Activated B cell treated with CpG ODN at 0.5 μM for 24 hours (primary cell): ENCODE measurements at regions of chr12 and their contacts with region 1.

Region 1: GRCh38 chr12:31922341-31923062 is 36.7 kb upstream of the RESF1 start:
- DNase-seq: no peak
- ATAC-seq: no peak
- H3K4me3 Mint-ChIP-seq: no peak overlapping the region
- H3K27ac Mint-ChIP-seq: no peak overlapping the region
- H3K4me1 Mint-ChIP-seq: no peaks in the 10 kb centered on the region
- H3K27me3 Mint-ChIP-seq: no peaks in the 10 kb centered on the region
- CTCF ChIP-seq: no peak

Region 2: DNA sequence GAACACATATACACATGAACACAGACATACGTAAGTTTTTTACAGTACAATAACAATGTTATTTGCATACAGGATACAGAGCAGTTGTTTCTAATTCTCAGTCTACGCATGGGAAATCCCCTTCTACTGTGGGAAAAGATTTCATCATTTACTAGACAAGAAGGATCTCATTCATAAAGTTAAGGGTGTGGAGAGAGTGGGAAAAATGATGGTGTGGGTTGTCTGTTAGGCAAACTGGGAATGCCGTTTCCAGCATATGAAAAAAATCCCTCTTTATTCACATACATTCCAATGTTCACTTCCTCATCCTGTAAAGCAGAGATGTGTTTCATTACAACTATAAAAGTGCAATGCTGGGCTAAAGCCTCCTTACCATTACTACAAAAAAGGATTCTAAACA is 717.4 kb before region 1 on chr12:
- CTCF ChIA-PET with region 1: no interaction called
- POLR2A ChIA-PET with region 1: no interaction called
- intact Hi-C with region 1: no loop called
- DNase-seq: no peak
- ATAC-seq: peak; percentile 88
- H3K4me3 Mint-ChIP-seq: peak overlapping the region; percentile 29
- H3K27ac Mint-ChIP-seq: peak overlapping the region; percentile 13
- H3K4me1 Mint-ChIP-seq: peaks cover 19% of the 10 kb centered on the region
- H3K27me3 Mint-ChIP-seq: peaks cover 9% of the 10 kb centered on the region
- CTCF ChIP-seq: no peak

Region 3: DNA sequence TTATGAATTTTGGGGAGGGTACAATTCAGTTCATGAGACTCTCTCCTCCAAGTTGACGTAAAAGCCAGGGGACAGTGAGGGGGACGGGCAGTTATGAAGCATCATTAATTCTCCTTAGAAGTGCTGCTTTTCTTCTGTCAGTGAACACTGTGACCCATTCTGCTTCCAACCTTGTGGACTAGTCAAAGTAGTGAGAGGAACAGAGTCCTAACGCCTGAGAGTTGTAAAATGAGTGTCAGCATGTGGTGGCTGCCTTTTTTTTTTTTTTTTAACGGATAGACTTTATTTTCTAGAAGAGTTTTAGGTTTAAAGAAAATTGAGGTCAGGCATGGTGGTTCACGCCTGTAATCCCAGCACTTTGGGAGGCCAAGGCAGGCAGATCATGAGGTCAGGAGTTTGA is 52.2 kb after region 1 on chr12:
- CTCF ChIA-PET with region 1: no interaction called
- POLR2A ChIA-PET with region 1: no interaction called
- intact Hi-C with region 1: no loop called
- DNase-seq: no peak
- ATAC-seq: no peak
- H3K4me3 Mint-ChIP-seq: no peak overlapping the region
- H3K27ac Mint-ChIP-seq: no peak overlapping the region
- H3K4me1 Mint-ChIP-seq: peaks cover 26% of the 10 kb centered on the region
- H3K27me3 Mint-ChIP-seq: no peaks in the 10 kb centered on the region
- CTCF ChIP-seq: no peak

Region 4: GRCh38 chr12:32240831-32241230 is 318.3 kb after region 1 on chr12:
- CTCF ChIA-PET with region 1: no interaction called
- POLR2A ChIA-PET with region 1: interaction called, 11 read pairs
- intact Hi-C with region 1: no loop called
- DNase-seq: no peak
- ATAC-seq: no peak
- H3K4me3 Mint-ChIP-seq: no peak overlapping the region
- H3K27ac Mint-ChIP-seq: no peak overlapping the region
- H3K4me1 Mint-ChIP-seq: no peaks in the 10 kb centered on the region
- H3K27me3 Mint-ChIP-seq: no peaks in the 10 kb centered on the region
- CTCF ChIP-seq: no peak